ENCODE measurements at regions of chr1 and their contacts with region 1.

Region 1: DNA sequence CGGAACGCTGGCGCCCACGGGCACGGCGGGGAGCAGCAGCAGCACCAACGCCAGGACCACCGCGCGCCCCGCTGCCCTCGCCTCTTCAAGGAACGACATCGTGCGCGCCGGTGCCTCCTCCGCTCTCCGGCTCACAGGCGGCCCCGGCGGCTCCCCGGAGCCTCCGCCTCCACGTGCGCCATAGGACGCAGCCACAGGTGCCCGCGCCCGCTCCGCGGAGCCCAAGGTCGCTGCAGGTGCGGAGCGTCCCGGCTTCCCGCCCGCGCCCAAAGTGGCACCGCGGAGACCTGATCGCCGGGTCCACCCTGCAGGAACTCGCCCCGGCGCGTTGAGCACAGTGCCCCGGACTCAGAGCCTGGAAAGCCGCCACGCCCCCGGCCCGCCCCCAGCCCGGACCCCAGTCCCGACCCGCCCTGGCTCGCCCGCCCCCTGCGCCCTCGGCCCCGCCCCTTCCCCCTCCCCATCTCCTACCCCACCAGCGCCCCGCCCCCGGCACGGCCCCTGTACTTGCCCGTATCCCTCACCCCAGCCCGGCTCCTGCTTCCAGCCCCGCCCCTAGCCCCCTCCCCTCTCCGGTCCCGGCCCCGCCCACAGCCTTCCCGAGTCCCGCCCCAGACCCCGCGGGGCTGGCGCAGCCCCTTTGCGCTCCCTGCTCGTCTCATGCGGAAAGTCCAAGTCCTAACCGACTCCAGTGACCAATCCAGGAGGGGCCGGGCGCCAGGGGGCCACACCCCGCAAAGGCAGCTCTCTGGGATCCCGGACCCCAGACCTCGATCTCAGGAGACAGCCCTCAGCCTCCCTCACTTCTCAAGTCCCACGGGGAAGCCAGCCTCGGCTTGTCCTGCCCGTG is at the start of gene MEGF6:
- DNase-seq: peak; percentile 81
- H3K4me3 ChIP-seq: peak within 1 kb of the TSS; percentile 22 to 67 (median 54)
- H3K27ac ChIP-seq: no peak within 1 kb of the TSS
- H3K4me1 ChIP-seq: peaks cover 39% of the 10 kb centered on the region
- H3K27me3 ChIP-seq: no peaks in the 10 kb centered on the region
- CTCF ChIP-seq: no peak
- POLR2A ChIP-seq: no peak
- total RNA-seq, gene MEGF6: 47.4 and 63.7 TPM in 2 replicates

Region 2: GRCh38 chr1:3543076-3544039 is 68.0 kb before region 1 on chr1:
- CTCF ChIA-PET with region 1: no interaction called
- POLR2A ChIA-PET with region 1: no interaction called
- dilution Hi-C with region 1: no loop called
- intact Hi-C with region 1: loop called (anchors 2 kb)
- DNase-seq: peak; percentile 29
- H3K4me3 ChIP-seq: no peak overlapping the region
- H3K27ac ChIP-seq: no peak overlapping the region
- H3K4me1 ChIP-seq: peaks cover 17% of the 10 kb centered on the region
- H3K27me3 ChIP-seq: no peaks in the 10 kb centered on the region
- CTCF ChIP-seq: no peak
- POLR2A ChIP-seq: no peak

Region 3: GRCh38 chr1:3564921-3565827 is 46.2 kb before region 1 on chr1:
- CTCF ChIA-PET with region 1: interaction called, 8 read pairs
- POLR2A ChIA-PET with region 1: no interaction called
- dilution Hi-C with region 1: no loop called
- intact Hi-C with region 1: loop called (anchors 1 kb)
- DNase-seq: peak; percentile 26
- H3K4me3 ChIP-seq: no peak overlapping the region
- H3K27ac ChIP-seq: no peak overlapping the region
- H3K4me1 ChIP-seq: no peaks in the 10 kb centered on the region
- H3K27me3 ChIP-seq: no peaks in the 10 kb centered on the region
- CTCF ChIP-seq: peak; percentile 89 to 90
- POLR2A ChIP-seq: no peak

Region 4: DNA sequence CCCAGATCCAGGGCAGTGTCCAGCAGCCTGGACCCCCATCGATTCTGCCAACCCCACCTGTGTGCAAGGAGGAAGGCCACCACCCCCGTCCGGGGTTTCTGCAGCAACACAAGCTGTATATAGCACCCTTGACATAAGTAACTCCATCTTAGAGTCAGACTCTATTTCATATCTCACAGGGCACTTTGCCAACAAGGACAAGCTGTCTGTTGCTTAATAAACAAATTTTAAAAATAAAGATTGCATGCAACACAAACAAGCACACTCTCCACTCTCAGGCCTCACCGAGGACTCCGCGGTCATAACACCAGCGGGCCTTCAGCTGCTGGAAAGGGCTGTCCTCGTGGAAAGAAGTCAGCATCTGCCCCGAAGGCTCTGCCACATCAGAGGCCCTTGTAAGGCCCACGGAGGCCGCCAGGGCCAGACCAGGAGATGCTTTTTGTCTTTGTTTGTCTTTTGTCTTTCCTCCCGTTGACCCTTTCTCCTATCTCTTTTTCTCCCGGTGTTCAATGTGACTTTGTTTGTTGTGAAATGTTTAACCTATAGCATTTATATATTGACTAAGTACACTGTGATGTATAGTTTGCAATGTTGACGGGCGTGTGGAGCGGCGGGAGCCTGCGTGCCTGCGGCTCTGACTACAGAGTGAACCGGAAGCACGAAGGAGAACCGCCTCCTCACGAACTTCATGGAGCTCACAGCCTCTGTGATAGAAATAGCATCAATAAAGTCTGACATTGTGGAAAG is 24.3 kb before region 1 on chr1:
- CTCF ChIA-PET with region 1: interaction called, 6 read pairs
- POLR2A ChIA-PET with region 1: interaction called, 3 read pairs
- dilution Hi-C with region 1: no loop called
- intact Hi-C with region 1: loop called (anchors 1 kb)
- DNase-seq: no peak
- H3K4me3 ChIP-seq: no peak overlapping the region
- H3K27ac ChIP-seq: no peak overlapping the region
- H3K4me1 ChIP-seq: peaks cover 14% of the 10 kb centered on the region
- H3K27me3 ChIP-seq: no peaks in the 10 kb centered on the region
- CTCF ChIP-seq: no peak
- POLR2A ChIP-seq: no peak

Region 5: DNA sequence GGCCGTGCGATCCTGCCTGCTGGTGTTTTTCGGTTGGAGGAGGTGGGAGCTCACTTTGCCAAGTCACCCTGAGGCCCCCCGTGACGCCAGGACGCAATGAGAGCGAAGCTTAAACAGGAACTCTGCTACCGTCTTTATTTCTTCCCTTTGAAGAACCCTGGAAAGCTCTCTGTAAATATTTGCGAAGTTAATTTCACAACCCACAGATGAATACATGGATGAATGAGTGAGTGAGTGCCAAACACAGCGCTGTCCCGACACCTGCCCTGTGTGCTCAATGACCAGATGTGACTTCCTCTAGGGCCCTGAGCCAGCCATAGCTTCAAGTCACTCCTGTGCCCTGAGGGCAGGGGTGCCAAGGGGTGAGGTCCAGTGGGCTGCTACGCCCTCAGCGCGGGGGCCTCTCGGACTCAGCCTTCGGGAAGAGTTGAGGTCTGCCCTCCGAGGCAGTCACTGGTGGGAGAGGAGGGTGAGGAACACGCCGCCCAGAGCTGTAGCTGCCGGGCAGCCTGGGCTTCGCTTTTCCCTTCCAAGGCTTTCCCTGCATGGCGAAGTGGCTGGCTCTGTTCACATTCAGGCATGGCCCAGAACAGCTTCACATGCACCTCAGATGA is 331.5 kb after region 1 on chr1:
- CTCF ChIA-PET with region 1: no interaction called
- POLR2A ChIA-PET with region 1: no interaction called
- dilution Hi-C with region 1: no loop called
- intact Hi-C with region 1: no loop called
- DNase-seq: no peak
- H3K4me3 ChIP-seq: no peak overlapping the region
- H3K27ac ChIP-seq: no peak overlapping the region
- H3K4me1 ChIP-seq: no peaks in the 10 kb centered on the region
- H3K27me3 ChIP-seq: no peaks in the 10 kb centered on the region
- CTCF ChIP-seq: no peak
- POLR2A ChIP-seq: no peak

Measured in endothelial cell of umbilical vein (primary cell).